SK-N-SH (cell line): ENCODE measurements at regions of chr15 and their contacts with region 1.

Region 1: DNA sequence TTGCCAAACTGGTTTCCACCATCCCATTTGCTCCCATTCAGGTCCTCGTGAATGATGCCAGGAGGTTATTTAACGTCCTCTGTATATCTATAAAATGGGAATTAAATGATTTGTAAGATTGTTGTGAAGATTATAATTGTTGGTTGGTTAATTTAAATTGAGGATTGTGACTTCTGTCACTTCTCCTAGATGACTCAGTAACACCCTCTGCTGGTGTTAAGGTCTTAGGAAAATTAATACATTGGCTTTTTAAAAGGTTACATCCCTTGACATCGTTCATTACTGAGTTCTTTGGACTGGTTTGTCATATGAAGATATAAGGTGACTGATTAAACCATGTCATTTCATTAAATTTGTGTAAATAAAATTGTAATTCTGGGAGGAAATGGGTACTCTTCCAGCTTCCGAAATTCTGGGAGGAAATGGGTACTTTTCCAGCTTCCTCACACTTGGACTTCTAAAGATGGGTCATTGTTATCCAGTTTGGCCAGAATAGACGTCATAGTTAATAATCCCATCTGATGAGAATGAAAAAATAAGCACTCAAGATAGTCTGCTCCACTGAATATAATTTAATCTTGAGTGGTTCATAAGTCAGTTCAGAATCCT is 33.3 kb upstream of the PAQR5 start:
- DNase-seq: no peak
- H3K4me3 ChIP-seq: no peak overlapping the region; a peak in 1 of 4 replicates
- H3K27ac ChIP-seq: no peak overlapping the region
- H3K4me1 ChIP-seq: no peaks in the 10 kb centered on the region
- H3K27me3 ChIP-seq: no peaks in the 10 kb centered on the region
- CTCF ChIP-seq: peak; percentile 60
- EP300 ChIP-seq: no peak
- RAD21 ChIP-seq: peak; percentile 66

Region 2: GRCh38 chr15:68972201-68973065 is 293.0 kb before region 1 on chr15:
- CTCF ChIA-PET with region 1: no interaction called
- POLR2A ChIA-PET with region 1: no interaction called
- DNase-seq: no peak
- H3K4me3 ChIP-seq: no peak overlapping the region
- H3K27ac ChIP-seq: no peak overlapping the region
- H3K4me1 ChIP-seq: no peaks in the 10 kb centered on the region
- H3K27me3 ChIP-seq: no peaks in the 10 kb centered on the region
- CTCF ChIP-seq: no peak
- EP300 ChIP-seq: no peak
- RAD21 ChIP-seq: no peak

Region 3: DNA sequence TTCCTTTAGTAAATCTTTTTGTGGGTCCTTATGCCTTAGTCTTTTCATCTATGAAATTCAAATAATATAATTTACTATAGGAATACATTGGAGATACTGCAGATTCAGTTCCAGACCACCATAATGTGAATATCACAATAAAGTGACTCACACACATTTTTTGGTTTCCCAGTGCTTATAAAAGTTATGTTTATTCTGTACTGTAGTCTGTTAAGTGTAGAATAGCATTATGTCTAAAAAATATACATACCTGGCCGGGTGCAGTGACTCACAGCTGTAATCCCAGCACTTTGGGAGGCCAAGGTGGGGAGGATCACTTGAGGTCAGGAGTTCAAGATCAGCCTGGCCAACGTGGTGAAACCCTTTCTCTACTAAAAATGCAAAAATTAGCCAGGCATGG is 20.7 kb before region 1 on chr15:
- CTCF ChIA-PET with region 1: interaction called, 10 read pairs
- POLR2A ChIA-PET with region 1: no interaction called
- DNase-seq: no peak
- H3K4me3 ChIP-seq: no peak overlapping the region
- H3K27ac ChIP-seq: no peak overlapping the region
- H3K4me1 ChIP-seq: no peaks in the 10 kb centered on the region; a peak in 1 of 4 replicates
- H3K27me3 ChIP-seq: no peaks in the 10 kb centered on the region
- CTCF ChIP-seq: no peak
- EP300 ChIP-seq: no peak
- RAD21 ChIP-seq: no peak